ENCODE measurements at regions of chr2 and their contacts with region 1.

Region 1: DNA sequence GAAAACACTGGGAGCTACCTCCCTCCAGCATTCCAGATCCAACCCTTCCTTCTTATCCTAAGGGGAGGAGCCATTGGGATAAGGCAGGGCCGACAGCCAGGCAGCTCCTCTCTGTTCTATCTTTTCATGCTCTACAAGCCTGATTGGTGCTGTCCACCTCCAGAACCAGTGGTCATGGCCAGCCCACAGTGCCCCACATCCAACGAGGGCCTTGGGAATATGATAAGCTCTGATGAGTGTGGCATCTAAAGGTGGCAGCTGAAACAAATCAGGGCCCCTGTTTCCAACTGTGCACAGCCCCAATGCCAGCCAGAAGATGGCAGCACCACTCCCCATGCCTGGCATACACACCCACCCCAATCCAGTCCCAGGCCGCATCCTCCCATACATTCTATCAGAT is 329.3 kb downstream of the C1D start:
- DNase-seq: peak; percentile 21 to 76
- H3K4me3 ChIP-seq: no peak overlapping the region
- H3K27ac ChIP-seq: no peak overlapping the region
- H3K4me1 ChIP-seq: no peaks in the 10 kb centered on the region
- H3K27me3 ChIP-seq: no peaks in the 10 kb centered on the region
- CTCF ChIP-seq: peak; percentile 68 to 82 (median 72)
- EP300 ChIP-seq: no peak
- POLR2A ChIP-seq: no peak
- RAD21 ChIP-seq: peak; percentile 69 to 78

Region 2: GRCh38 chr2:67412424-67412823 is 321.1 kb before region 1 on chr2:
- CTCF ChIA-PET with region 1: no interaction called
- POLR2A ChIA-PET with region 1: no interaction called
- DNase-seq: no peak
- H3K4me3 ChIP-seq: no peak overlapping the region
- H3K27ac ChIP-seq: no peak overlapping the region
- H3K4me1 ChIP-seq: no peaks in the 10 kb centered on the region
- H3K27me3 ChIP-seq: no peaks in the 10 kb centered on the region
- CTCF ChIP-seq: no peak
- EP300 ChIP-seq: no peak
- POLR2A ChIP-seq: no peak
- RAD21 ChIP-seq: no peak

Region 3: DNA sequence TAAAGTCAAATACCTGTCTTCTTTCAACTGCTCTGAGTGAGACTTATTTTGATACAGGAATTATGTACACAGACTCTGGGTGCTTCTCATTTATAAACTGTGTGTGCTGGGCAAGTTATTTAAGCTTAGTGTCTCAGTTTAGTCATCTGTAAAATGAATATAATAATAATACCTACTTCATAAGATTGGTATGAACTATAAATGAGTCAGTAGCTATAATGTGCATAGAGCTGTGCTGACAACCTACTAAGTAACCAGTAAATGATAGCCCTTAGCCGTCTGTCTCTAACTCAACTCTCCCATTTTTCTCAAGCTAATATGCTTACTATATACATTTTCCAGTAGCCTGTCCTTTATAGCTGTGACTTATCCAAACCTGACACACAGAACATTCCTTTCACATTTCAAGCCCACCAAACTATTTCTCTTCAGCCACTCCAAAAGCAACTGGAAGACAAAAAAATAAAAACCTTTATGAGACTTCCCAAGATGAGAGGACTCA is 16.6 kb before region 1 on chr2:
- CTCF ChIA-PET with region 1: interaction called, 11 read pairs
- POLR2A ChIA-PET with region 1: no interaction called
- DNase-seq: no peak
- H3K4me3 ChIP-seq: no peak overlapping the region
- H3K27ac ChIP-seq: no peak overlapping the region
- H3K4me1 ChIP-seq: no peaks in the 10 kb centered on the region
- H3K27me3 ChIP-seq: no peaks in the 10 kb centered on the region
- CTCF ChIP-seq: no peak
- EP300 ChIP-seq: no peak
- POLR2A ChIP-seq: no peak
- RAD21 ChIP-seq: no peak

Region 4: GRCh38 chr2:67752969-67753368 is 19.5 kb after region 1 on chr2:
- CTCF ChIA-PET with region 1: interaction called, 16 read pairs
- POLR2A ChIA-PET with region 1: no interaction called
- DNase-seq: no peak
- H3K4me3 ChIP-seq: no peak overlapping the region
- H3K27ac ChIP-seq: no peak overlapping the region
- H3K4me1 ChIP-seq: no peaks in the 10 kb centered on the region
- H3K27me3 ChIP-seq: peaks cover 0 to 1% (median 0%) of the 10 kb centered on the region in 4 experiments; a peak in 1 of 7 replicates
- CTCF ChIP-seq: no peak
- EP300 ChIP-seq: no peak
- POLR2A ChIP-seq: no peak
- RAD21 ChIP-seq: no peak

Region 5: GRCh38 chr2:67760995-67761394 is 27.5 kb after region 1 on chr2:
- CTCF ChIA-PET with region 1: interaction called, 10 read pairs
- POLR2A ChIA-PET with region 1: no interaction called
- DNase-seq: no peak
- H3K4me3 ChIP-seq: no peak overlapping the region
- H3K27ac ChIP-seq: no peak overlapping the region
- H3K4me1 ChIP-seq: no peaks in the 10 kb centered on the region; a peak in 1 of 7 replicates
- H3K27me3 ChIP-seq: no peaks in the 10 kb centered on the region
- CTCF ChIP-seq: no peak
- EP300 ChIP-seq: no peak
- POLR2A ChIP-seq: no peak
- RAD21 ChIP-seq: no peak

Region 6: GRCh38 chr2:67773851-67774250 is 40.3 kb after region 1 on chr2:
- CTCF ChIA-PET with region 1: no interaction called
- POLR2A ChIA-PET with region 1: no interaction called
- DNase-seq: no peak
- H3K4me3 ChIP-seq: no peak overlapping the region
- H3K27ac ChIP-seq: no peak overlapping the region
- H3K4me1 ChIP-seq: no peaks in the 10 kb centered on the region
- H3K27me3 ChIP-seq: no peaks in the 10 kb centered on the region
- CTCF ChIP-seq: no peak
- EP300 ChIP-seq: no peak
- POLR2A ChIP-seq: no peak
- RAD21 ChIP-seq: no peak

Region 7: DNA sequence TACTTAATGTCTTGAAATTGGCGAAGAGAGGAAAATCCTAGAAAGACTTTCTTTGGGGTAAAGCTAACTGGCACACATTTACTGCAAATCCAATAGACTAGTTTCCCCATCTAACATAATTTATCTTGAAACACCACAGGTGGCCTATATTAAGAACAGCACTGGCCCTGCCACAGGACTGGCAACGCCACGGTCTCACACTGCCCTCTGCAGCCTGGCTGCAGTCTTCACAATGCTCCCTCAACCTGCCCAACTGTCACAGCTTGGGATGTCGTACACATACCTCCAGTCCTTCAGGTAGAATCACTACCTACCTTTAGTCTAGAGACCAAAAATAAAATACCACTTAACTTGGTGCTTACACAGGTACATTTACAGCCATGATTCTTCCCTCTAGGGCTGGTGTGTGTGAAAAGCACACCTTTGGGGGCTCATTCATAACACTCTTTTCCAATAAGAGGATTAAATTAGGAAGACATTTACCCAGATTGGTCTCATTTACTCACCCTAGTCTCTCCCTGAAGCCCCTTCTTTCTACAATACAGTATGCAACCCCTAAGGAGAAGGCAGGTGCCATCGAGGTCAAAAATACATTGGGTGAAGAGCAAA is 107.0 kb after region 1 on chr2:
- CTCF ChIA-PET with region 1: interaction called, 96 read pairs
- POLR2A ChIA-PET with region 1: no interaction called
- DNase-seq: peak; percentile 39 to 68
- H3K4me3 ChIP-seq: no peak overlapping the region
- H3K27ac ChIP-seq: no peak overlapping the region
- H3K4me1 ChIP-seq: peaks cover 0 to 2% (median 0%) of the 10 kb centered on the region in 4 experiments; a peak in 1 of 7 replicates
- H3K27me3 ChIP-seq: no peaks in the 10 kb centered on the region
- CTCF ChIP-seq: peak; percentile 86 to 96 (median 95)
- EP300 ChIP-seq: no peak
- POLR2A ChIP-seq: no peak
- RAD21 ChIP-seq: peak; percentile 98 to 99

Region 8: GRCh38 chr2:68031542-68032160 is 298.1 kb after region 1 on chr2:
- CTCF ChIA-PET with region 1: interaction called, 32 read pairs
- POLR2A ChIA-PET with region 1: no interaction called
- DNase-seq: no peak
- H3K4me3 ChIP-seq: no peak overlapping the region
- H3K27ac ChIP-seq: no peak overlapping the region
- H3K4me1 ChIP-seq: no peaks in the 10 kb centered on the region
- H3K27me3 ChIP-seq: no peaks in the 10 kb centered on the region
- CTCF ChIP-seq: peak in 2 of 3 experiments; percentile 27 to 49; a peak in 2 of 4 replicates
- EP300 ChIP-seq: no peak
- POLR2A ChIP-seq: no peak
- RAD21 ChIP-seq: peak; percentile 86 to 90

Measured in H1 (cell line).